ENCODE measurements at regions of chr4 and their contacts with region 1.

Region 1: GRCh38 chr4:112636688-112637551 is at the starts of genes LARP7 and ZGRF1:
- DNase-seq: peak; percentile 100
- H3K4me3 ChIP-seq: peak within 1 kb of the TSS; percentile 54 to 62 (median 56)
- H3K27ac ChIP-seq: peak within 1 kb of the TSS; percentile 89 to 94 (median 91)
- H3K4me1 ChIP-seq: peaks cover 0 to 25% (median 18%) of the 10 kb centered on the region in 4 donors
- H3K27me3 ChIP-seq: no peaks in the 10 kb centered on the region
- CTCF ChIP-seq: peak; percentile 86 to 99 (median 98)
- EP300 ChIP-seq: peak in 1 of 4 donors; percentile 41
- POLR2A ChIP-seq: no peak
- total RNA-seq, gene LARP7: 50.0 to 57.9 (median 52.9) TPM
- total RNA-seq, gene ZGRF1: 3.6 to 5.3 (median 4.0) TPM

Region 2: GRCh38 chr4:112231779-112232713 is 404.9 kb before region 1 on chr4 and contains the start of gene AP1AR:
- intact Hi-C with region 1: loop called (anchors 10 kb)
- DNase-seq: peak; percentile 92
- H3K4me3 ChIP-seq: peak within 1 kb of the TSS; percentile 77 to 97 (median 90)
- H3K27ac ChIP-seq: peak within 1 kb of the TSS; percentile 93 to 99 (median 97)
- H3K4me1 ChIP-seq: peaks cover 0 to 26% (median 12%) of the 10 kb centered on the region in 4 donors
- H3K27me3 ChIP-seq: no peaks in the 10 kb centered on the region
- CTCF ChIP-seq: peak in 3 of 4 experiments; percentile 5 to 25 (median 17)
- EP300 ChIP-seq: no peak
- POLR2A ChIP-seq: peak; percentile 51 to 73
- total RNA-seq, gene AP1AR: 6.9 to 20.7 (median 18.9) TPM

Region 3: GRCh38 chr4:112765317-112765975 is 128.5 kb after region 1 on chr4:
- intact Hi-C with region 1: loop called (anchors 10 kb)
- DNase-seq: no peak
- H3K4me3 ChIP-seq: no peak overlapping the region
- H3K27ac ChIP-seq: no peak overlapping the region
- H3K4me1 ChIP-seq: no peaks in the 10 kb centered on the region
- H3K27me3 ChIP-seq: no peaks in the 10 kb centered on the region
- CTCF ChIP-seq: peak in 3 of 4 experiments; percentile 10 to 25 (median 12)
- EP300 ChIP-seq: no peak
- POLR2A ChIP-seq: no peak

Region 4: DNA sequence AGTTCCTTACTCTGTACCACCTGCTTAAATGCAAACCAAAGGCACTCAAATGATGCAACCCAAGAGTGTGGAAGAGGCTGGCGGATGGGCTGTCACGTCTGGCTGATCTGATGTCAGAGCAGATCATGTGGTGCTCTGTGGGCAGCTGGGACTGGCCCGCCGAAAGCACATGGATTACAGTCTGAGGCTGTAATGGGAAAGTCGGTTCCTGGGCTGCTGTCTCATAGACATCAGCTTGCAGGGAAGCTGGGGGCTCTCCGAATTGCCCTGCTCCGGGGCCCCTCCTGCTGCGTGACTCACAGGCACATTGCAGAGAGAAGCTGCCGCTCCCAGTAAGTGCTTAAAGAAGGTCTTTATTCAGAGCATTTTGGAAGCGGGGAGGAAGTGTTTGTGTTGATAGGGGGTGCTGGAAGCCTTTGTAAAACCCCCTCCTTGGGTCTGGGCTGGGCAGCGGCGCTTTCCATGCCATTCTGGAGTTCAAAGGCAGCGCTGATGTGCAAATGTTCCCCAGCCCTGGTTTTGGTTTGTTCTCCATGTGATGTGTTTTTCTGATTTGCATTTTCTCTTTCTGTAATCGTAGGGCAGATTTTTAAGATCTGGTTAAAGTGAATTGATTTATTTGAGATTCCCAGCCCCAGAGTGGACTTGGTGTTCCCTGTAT is 181.1 kb after region 1 on chr4:
- intact Hi-C with region 1: loop called (anchors 5 kb)
- DNase-seq: peak; percentile 89
- H3K4me3 ChIP-seq: peak overlapping the region; percentile 45 to 66 (median 54)
- H3K27ac ChIP-seq: peak overlapping the region; percentile 63 to 82 (median 74)
- H3K4me1 ChIP-seq: peaks cover 0 to 15% (median 5%) of the 10 kb centered on the region in 4 donors
- H3K27me3 ChIP-seq: no peaks in the 10 kb centered on the region
- CTCF ChIP-seq: no peak
- EP300 ChIP-seq: no peak
- POLR2A ChIP-seq: peak in 1 of 2 donors; percentile 26

Region 5: GRCh38 chr4:112938461-112939058 is 301.6 kb after region 1 on chr4:
- intact Hi-C with region 1: loop called (anchors 2 kb)
- DNase-seq: no peak
- H3K4me3 ChIP-seq: no peak overlapping the region
- H3K27ac ChIP-seq: no peak overlapping the region
- H3K4me1 ChIP-seq: peaks cover 0 to 8% (median 0%) of the 10 kb centered on the region in 4 donors
- H3K27me3 ChIP-seq: no peaks in the 10 kb centered on the region
- CTCF ChIP-seq: peak; percentile 60 to 83 (median 75)
- EP300 ChIP-seq: no peak
- POLR2A ChIP-seq: no peak

Region 6: DNA sequence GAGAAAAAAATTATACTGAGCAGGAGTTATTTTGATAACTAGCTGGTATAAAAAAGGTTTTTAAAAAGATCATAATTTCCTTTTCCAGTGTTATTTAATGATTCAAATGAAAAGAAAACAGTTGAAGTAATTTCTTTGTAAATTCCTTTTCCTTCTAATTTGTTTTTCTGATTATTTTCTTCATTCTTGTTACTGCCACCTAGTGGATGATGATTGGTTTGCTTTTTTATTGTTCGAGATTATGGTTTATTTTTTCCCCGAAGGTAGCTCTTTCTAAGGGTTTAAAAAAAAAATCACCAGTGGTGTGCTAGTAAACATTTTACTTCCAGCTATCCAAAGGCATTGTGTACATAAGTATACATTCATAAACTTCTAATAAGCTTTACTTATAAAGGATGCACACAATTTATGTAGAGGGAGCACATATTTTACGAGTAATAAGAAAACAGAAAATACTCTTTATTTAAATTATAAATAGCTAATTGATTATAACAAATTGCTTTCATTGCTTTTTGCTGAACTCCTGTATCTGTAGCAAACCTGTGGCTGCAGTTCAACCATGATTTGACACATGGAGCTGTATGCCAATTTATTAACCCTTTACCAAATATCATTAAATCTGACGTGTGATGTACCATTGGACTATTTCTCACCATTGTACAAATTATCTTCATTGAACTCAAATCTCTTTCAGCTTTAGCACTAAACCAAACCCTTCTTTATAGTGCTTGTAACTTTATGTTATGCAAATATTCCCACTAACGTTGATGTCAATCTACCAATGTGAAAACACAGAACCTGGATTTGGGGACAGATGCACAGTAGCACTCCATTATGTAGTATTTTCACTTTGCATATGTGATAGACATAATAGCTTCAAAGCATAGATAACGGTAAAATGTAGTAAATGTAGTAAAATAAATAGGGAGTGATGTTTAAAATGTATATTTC is 314.7 kb after region 1 on chr4:
- intact Hi-C with region 1: loop called (anchors 5 kb)
- DNase-seq: no peak
- H3K4me3 ChIP-seq: peak overlapping the region in 1 of 4 donors; percentile 24
- H3K27ac ChIP-seq: no peak overlapping the region
- H3K4me1 ChIP-seq: peaks cover 0 to 9% (median 0%) of the 10 kb centered on the region in 4 donors
- H3K27me3 ChIP-seq: no peaks in the 10 kb centered on the region
- CTCF ChIP-seq: peak; percentile 31 to 57 (median 36)
- EP300 ChIP-seq: no peak
- POLR2A ChIP-seq: no peak

Region 7: DNA sequence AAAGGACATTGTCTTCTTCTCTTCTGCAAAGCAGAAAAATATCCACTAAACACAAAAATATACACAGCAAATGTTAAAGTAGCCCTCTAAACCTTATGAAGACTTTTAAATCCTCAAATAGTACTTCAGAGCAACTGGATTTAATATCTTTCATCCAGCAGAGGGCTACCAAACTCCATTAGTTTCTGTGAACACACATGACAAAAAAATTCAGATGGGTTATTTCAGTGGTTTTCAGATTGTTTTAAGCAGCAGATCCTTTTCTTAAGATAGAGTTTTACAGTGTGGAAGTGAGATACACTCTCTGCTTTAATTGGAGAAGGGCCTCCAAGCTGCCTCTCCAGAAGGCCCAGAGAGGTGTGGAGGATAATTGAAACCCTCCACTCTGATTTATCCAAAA is 469.2 kb after region 1 on chr4:
- intact Hi-C with region 1: loop called (anchors 10 kb)
- DNase-seq: no peak
- H3K4me3 ChIP-seq: no peak overlapping the region
- H3K27ac ChIP-seq: no peak overlapping the region
- H3K4me1 ChIP-seq: no peaks in the 10 kb centered on the region
- H3K27me3 ChIP-seq: no peaks in the 10 kb centered on the region
- CTCF ChIP-seq: peak in 1 of 4 experiments; percentile 21
- EP300 ChIP-seq: no peak
- POLR2A ChIP-seq: no peak

Measured in sigmoid colon (tissue), 7 donors.